ENCODE measurements at regions of chr19 and their contacts with region 1.

Region 1: DNA sequence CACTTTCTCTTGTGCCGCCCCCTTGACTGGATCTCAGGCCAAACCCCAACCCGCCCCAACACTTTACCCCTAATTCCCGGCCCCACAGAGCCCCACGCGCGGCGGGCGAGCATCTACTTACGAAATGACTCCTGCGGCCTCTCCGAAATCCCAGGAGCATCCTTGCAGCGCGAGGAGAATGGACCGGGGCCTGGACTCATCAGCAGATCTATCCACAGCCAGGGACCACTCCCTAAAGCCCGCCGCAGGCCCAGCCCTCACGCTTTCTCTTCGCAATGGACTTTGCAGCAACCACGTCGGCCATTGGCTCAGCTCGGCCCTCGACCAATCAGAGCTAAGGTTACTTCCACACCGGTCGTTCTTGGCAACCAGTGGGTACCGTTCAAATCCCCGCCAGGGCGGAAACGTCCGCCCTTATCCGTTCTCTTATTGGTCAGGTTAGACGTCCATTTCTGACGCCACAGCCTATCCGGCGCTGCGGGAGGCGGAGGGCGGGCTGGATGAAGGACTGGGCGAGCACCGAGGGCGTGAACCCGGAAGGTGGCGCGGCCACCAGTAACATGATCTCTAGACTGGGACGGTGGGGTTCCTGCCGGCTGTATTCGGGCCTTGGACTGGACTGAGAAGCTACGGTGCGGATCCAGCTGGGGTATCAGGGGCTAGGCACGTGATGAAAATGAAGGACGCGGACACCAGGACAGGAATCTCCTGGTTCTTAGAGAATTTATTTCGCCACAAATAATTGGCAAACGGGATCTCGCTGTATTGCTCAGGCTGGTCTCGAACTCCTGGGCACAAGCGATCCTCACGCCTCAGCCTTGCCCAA is at the starts of genes CEP89 and FAAP24:
- DNase-seq: peak; percentile 99
- H3K4me3 ChIP-seq: peak within 1 kb of the TSS; percentile 62 to 79
- H3K4me3 Mint-ChIP-seq: peak within 1 kb of the TSS; percentile 99 to 100 (median 99)
- H3K27ac ChIP-seq: peak within 1 kb of the TSS; percentile 65
- H3K27ac Mint-ChIP-seq: peak within 1 kb of the TSS; percentile 92 to 98 (median 97)
- H3K4me1 ChIP-seq: peaks cover 10% of the 10 kb centered on the region
- H3K4me1 Mint-ChIP-seq: peaks cover 14 to 29% (median 20%) of the 10 kb centered on the region in 4 donors
- H3K27me3 ChIP-seq: no peaks in the 10 kb centered on the region
- H3K27me3 Mint-ChIP-seq: no peaks in the 10 kb centered on the region
- total RNA-seq, gene CEP89: 20.2 to 20.6 TPM
- total RNA-seq, gene FAAP24: 1.3 to 1.8 TPM

Region 2: DNA sequence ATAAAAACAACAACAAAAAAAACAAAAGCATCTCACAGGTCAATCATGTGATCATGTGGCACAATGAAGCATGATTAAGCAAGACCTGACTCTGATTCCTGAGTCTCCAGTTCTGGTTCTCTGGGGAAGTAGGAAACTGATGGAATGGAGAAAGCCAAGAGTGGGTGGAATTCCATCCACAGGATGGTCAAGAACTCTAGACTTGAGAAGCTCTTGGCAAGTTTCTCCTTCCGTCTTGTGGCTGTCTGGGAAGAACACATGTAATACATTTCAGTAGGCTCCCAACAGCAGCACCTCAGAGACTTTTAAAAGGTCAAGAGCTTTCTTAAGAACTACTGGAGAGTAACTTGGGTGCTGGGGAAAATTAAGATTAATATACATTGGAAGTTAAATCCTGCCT is 1544.1 kb before region 1 on chr19:
- CTCF ChIA-PET with region 1: no interaction called
- POLR2A ChIA-PET with region 1: no interaction called
- intact Hi-C with region 1: no loop called
- DNase-seq: no peak
- H3K4me3 ChIP-seq: no peak overlapping the region
- H3K4me3 Mint-ChIP-seq: no peak overlapping the region
- H3K27ac ChIP-seq: no peak overlapping the region
- H3K27ac Mint-ChIP-seq: no peak overlapping the region
- H3K4me1 ChIP-seq: no peaks in the 10 kb centered on the region
- H3K4me1 Mint-ChIP-seq: no peaks in the 10 kb centered on the region
- H3K27me3 ChIP-seq: no peaks in the 10 kb centered on the region
- H3K27me3 Mint-ChIP-seq: peaks cover 7 to 9% of the 10 kb centered on the region in 2 donors

Region 3: GRCh38 chr19:32599736-32600157 is 372.2 kb before region 1 on chr19:
- CTCF ChIA-PET with region 1: no interaction called
- POLR2A ChIA-PET with region 1: no interaction called
- intact Hi-C with region 1: loop called (anchors 1 kb)
- DNase-seq: peak; percentile 40 to 57 (median 53)
- H3K4me3 ChIP-seq: no peak overlapping the region
- H3K4me3 Mint-ChIP-seq: no peak overlapping the region
- H3K27ac ChIP-seq: no peak overlapping the region
- H3K27ac Mint-ChIP-seq: peak overlapping the region in 2 of 7 donors; percentile 14 to 19
- H3K4me1 ChIP-seq: no peaks in the 10 kb centered on the region
- H3K4me1 Mint-ChIP-seq: peaks cover 5 to 8% (median 7%) of the 10 kb centered on the region in 4 donors
- H3K27me3 ChIP-seq: no peaks in the 10 kb centered on the region
- H3K27me3 Mint-ChIP-seq: no peaks in the 10 kb centered on the region

Region 4: DNA sequence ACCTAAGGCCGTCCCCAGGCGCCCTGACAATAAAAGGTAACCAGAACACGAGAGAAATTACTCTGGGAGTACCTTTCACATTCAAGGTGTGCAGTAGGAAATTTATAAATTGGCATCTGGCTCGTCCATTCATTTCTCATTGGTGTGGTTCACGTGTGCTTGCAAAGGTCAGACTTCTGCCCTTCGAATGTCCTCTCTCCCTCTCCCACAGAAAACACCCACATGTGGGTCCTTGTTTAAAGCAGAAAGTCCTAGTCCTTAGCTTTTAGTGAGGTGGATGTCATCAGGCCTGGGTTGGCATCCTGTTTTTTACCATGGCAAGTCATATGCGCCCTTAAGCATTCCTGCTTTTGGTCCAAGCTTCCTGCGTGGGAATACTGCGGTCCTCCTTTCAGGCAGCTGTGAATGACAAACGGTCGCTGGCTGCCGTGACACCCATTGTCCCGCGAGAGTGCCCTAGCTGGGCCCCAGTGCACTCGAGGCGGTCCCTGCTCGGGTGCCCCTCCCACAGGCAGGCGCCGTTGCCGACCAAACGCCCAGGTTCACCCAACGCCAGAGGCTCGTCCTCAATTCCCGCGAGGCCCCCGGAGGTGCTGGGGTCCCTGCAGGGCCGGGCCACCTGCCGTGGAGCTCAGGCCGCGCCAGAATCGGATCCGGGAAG is 280.5 kb before region 1 on chr19 and contains the start of gene NUDT19:
- CTCF ChIA-PET with region 1: interaction called, 3 read pairs
- POLR2A ChIA-PET with region 1: interaction called, 7 read pairs
- intact Hi-C with region 1: loop called (anchors 2 kb)
- DNase-seq: peak; percentile 68 to 79 (median 71)
- H3K4me3 ChIP-seq: peak within 1 kb of the TSS; percentile 85 to 89
- H3K4me3 Mint-ChIP-seq: peak within 1 kb of the TSS; percentile 91 to 94 (median 92)
- H3K27ac ChIP-seq: peak within 1 kb of the TSS; percentile 63
- H3K27ac Mint-ChIP-seq: peak within 1 kb of the TSS; percentile 80 to 96 (median 94)
- H3K4me1 ChIP-seq: peaks cover 45% of the 10 kb centered on the region
- H3K4me1 Mint-ChIP-seq: peaks cover 42 to 50% (median 45%) of the 10 kb centered on the region in 4 donors
- H3K27me3 ChIP-seq: no peaks in the 10 kb centered on the region
- H3K27me3 Mint-ChIP-seq: no peaks in the 10 kb centered on the region
- total RNA-seq, gene NUDT19: 10.5 to 10.6 TPM

Region 5: DNA sequence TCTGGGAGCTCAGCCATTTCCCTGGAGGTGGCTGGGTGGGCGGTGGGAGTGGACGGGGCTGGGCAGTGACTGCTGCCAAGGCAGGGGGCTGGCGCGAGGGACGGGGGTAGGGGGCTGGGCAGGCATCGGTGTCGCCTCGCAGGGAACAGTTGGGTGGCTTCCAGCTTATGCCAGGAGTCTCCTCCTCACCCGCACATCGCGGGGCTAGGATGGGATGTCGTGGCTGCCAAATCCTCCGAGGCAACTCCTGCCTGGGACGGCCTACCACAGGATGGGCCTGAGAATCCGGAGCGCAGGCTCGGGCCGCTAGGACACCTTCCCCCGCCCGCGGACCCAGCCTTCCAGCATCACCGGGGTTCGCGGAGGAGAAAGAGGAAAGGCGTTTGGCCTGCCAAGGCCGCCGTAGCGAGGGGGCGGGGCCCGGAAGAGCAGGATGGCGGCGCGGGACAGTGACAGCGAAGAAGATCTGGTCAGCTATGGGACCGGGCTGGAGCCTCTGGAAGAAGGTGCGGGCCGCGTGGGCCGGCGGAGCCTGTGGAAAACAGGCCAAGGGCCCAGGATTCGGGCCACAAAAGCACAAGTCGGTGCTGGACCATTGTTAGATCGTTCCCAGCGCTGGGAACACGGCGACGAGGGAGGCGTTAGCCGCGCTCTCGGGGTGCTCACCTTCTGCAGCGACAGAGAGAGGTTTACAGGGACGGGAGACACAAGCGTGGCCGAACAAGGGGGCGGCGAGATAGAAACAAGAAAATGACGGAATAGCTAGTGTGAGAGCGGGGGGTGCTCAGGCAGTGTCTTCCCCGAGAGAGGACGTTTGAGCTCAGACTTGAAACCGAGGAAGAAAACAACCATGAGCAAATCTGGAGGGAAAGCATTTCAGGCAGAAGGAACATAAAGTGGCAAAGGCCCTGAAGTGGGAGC is 109.1 kb after region 1 on chr19 and contains the start of gene GPATCH1:
- CTCF ChIA-PET with region 1: interaction called, 3 read pairs
- POLR2A ChIA-PET with region 1: interaction called, 3 read pairs
- intact Hi-C with region 1: loop called (anchors 1 kb)
- DNase-seq: peak; percentile 83 to 89 (median 85)
- H3K4me3 ChIP-seq: peak within 1 kb of the TSS; percentile 72 to 98
- H3K4me3 Mint-ChIP-seq: peak within 1 kb of the TSS; percentile 92 to 99 (median 96)
- H3K27ac ChIP-seq: peak within 1 kb of the TSS; percentile 75
- H3K27ac Mint-ChIP-seq: peak within 1 kb of the TSS; percentile 89 to 98 (median 95)
- H3K4me1 ChIP-seq: peaks cover 19% of the 10 kb centered on the region
- H3K4me1 Mint-ChIP-seq: peaks cover 17 to 25% (median 18%) of the 10 kb centered on the region in 4 donors
- H3K27me3 ChIP-seq: no peaks in the 10 kb centered on the region
- H3K27me3 Mint-ChIP-seq: no peaks in the 10 kb centered on the region
- total RNA-seq, gene GPATCH1: 15.5 to 16.7 TPM